Endothelial cell of umbilical vein (primary cell): ENCODE measurements at regions of chr1 and their contacts with region 1.

Region 1: DNA sequence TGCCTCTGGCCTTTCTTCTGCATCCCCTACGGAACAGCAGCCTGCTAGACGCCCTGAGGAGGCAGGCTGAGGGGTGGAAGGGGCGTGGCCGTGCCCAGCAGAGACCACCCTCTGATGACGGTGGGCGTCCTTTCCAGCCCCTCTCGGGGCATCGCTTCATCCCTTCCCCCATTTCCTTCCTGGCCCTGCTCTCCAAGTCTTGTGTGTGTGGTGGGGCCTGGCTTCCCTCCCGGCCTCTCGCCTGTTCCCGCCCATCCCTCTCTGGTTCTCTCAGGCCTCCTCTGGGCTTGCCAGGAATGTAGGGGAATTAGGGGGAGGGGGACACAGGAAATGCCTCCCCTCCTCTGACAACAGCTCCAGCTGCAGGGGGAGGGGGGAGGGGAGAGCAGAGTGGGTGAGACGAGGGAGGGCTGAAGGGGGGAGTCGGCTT is 51.1 kb downstream of the SKI start:
- DNase-seq: peak; percentile 98
- H3K4me3 ChIP-seq: no peak overlapping the region
- H3K27ac ChIP-seq: peak overlapping the region; percentile 70
- H3K4me1 ChIP-seq: peaks cover 24% of the 10 kb centered on the region
- H3K27me3 ChIP-seq: no peaks in the 10 kb centered on the region
- CTCF ChIP-seq: no peak
- POLR2A ChIP-seq: no peak

Region 2: DNA sequence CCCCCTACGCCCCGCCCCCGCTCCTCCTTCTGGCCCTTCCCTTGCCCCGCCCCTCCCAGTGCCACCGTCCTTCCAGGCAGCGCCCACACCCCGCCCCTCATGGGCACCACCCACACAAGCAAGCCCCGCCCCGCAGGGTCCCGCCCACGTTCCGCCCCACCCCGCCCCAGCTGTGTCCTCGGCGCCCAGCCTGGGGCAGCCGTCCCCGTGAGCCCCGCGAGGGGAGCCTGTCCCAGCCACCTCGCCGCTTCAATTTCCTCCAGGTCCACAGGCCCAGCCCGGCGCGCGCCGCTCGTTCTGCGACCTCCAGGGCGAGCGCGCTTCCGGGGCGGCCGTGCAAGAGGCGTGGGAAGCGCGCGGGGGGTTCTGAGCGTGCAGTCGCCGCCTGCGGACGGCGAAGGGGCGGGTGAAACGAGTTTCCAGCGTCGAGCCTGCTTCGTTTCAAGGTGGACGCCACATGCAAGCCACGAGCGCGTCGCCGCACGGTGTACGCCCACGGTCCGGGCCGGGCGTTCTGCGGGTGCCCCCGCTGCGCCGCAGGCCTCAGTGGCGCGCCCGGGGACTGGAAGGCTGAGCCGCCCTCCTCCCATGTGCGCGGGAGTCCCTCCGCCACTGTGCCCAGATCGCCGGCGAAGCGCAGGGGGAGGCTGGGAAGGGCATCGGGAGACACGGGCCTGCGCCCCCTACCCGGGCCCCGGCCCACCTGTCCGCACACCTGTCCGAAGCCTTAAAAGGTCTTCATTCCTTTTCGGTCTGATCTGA is 73.9 kb before region 1 on chr1:
- CTCF ChIA-PET with region 1: no interaction called
- POLR2A ChIA-PET with region 1: no interaction called
- dilution Hi-C with region 1: no loop called
- intact Hi-C with region 1: loop called (anchors 2 kb)
- DNase-seq: peak; percentile 86
- H3K4me3 ChIP-seq: peak overlapping the region in 2 of 3 experiments; percentile 26 to 45
- H3K27ac ChIP-seq: peak overlapping the region; percentile 24
- H3K4me1 ChIP-seq: peaks cover 29% of the 10 kb centered on the region
- H3K27me3 ChIP-seq: no peaks in the 10 kb centered on the region
- CTCF ChIP-seq: no peak
- POLR2A ChIP-seq: no peak

Region 3: GRCh38 chr1:2212542-2213491 is 66.4 kb before region 1 on chr1:
- CTCF ChIA-PET with region 1: no interaction called
- POLR2A ChIA-PET with region 1: no interaction called
- dilution Hi-C with region 1: no loop called
- intact Hi-C with region 1: loop called (anchors 1 kb)
- DNase-seq: peak; percentile 97
- H3K4me3 ChIP-seq: peak overlapping the region in 2 of 3 experiments; percentile 2 to 27
- H3K27ac ChIP-seq: peak overlapping the region; percentile 98
- H3K4me1 ChIP-seq: peaks cover 37% of the 10 kb centered on the region
- H3K27me3 ChIP-seq: no peaks in the 10 kb centered on the region
- CTCF ChIP-seq: peak; percentile 21 to 25
- POLR2A ChIP-seq: peak; percentile 71

Region 4: GRCh38 chr1:2233997-2234761 is 45.0 kb before region 1 on chr1:
- CTCF ChIA-PET with region 1: no interaction called
- POLR2A ChIA-PET with region 1: no interaction called
- dilution Hi-C with region 1: no loop called
- intact Hi-C with region 1: loop called (anchors 1 kb)
- DNase-seq: peak; percentile 47
- H3K4me3 ChIP-seq: peak overlapping the region in 2 of 3 experiments; percentile 0 to 10
- H3K27ac ChIP-seq: peak overlapping the region; percentile 46
- H3K4me1 ChIP-seq: peaks cover 40% of the 10 kb centered on the region
- H3K27me3 ChIP-seq: no peaks in the 10 kb centered on the region
- CTCF ChIP-seq: peak in 1 of 2 donors; percentile 9
- POLR2A ChIP-seq: no peak

Region 5: DNA sequence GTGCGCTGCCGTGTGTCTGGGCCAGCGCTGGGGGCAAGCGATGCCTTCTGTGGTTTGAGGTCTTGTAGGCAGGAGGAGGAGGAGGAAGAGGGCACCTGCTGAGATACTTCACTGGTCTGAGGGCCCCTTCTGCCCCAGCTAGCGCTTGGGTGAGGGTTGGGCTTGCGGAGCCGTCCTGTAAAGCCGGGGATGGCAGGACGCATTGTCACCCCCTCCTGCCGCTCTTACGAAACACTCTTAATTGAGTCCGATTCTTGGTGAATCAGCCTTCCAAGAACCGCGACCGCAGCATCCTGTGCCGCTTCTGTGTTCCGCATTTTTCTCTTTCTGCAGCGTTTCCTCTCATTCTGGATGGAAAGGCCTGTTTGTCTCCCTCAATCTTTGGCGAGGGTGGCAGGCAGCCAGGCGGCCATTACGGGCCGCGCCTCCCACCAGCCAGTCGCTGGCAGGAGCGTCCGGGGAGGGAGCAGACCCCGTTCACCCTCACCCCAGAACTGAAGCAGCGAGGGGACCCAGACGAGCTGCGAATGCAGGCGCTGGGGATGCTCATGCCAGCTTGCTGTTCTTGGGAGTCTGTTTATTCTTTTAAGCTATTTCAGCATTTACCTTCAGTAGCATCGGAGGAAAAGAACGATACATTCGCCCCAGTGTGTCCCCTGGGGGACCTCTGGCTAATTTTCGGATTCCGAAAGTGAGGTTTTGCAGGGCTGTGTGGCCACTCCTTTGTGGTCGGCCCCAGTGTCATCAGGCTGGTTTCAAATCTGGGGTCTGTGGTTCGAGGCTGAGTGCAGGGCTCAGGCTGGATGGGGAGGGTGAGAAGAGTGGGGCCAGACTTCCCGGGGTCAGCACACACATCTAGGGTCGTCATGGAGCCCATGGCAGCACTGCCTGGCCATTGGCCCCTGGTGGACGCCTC is 11.6 kb after region 1 on chr1:
- CTCF ChIA-PET with region 1: interaction called, 4 read pairs
- POLR2A ChIA-PET with region 1: no interaction called
- dilution Hi-C with region 1: no loop called
- intact Hi-C with region 1: loop called (anchors 1 kb)
- DNase-seq: peak; percentile 94
- H3K4me3 ChIP-seq: peak overlapping the region in 1 of 3 experiments; percentile 39
- H3K27ac ChIP-seq: peak overlapping the region; percentile 87
- H3K4me1 ChIP-seq: peaks cover 29% of the 10 kb centered on the region
- H3K27me3 ChIP-seq: no peaks in the 10 kb centered on the region
- CTCF ChIP-seq: no peak
- POLR2A ChIP-seq: peak; percentile 22

Region 6: GRCh38 chr1:2300851-2301606 is 21.8 kb after region 1 on chr1:
- CTCF ChIA-PET with region 1: no interaction called
- POLR2A ChIA-PET with region 1: no interaction called
- dilution Hi-C with region 1: no loop called
- intact Hi-C with region 1: loop called (anchors 1 kb)
- DNase-seq: peak; percentile 62
- H3K4me3 ChIP-seq: no peak overlapping the region
- H3K27ac ChIP-seq: peak overlapping the region; percentile 83
- H3K4me1 ChIP-seq: peaks cover 27% of the 10 kb centered on the region
- H3K27me3 ChIP-seq: no peaks in the 10 kb centered on the region
- CTCF ChIP-seq: no peak
- POLR2A ChIP-seq: peak; percentile 21

Region 7: DNA sequence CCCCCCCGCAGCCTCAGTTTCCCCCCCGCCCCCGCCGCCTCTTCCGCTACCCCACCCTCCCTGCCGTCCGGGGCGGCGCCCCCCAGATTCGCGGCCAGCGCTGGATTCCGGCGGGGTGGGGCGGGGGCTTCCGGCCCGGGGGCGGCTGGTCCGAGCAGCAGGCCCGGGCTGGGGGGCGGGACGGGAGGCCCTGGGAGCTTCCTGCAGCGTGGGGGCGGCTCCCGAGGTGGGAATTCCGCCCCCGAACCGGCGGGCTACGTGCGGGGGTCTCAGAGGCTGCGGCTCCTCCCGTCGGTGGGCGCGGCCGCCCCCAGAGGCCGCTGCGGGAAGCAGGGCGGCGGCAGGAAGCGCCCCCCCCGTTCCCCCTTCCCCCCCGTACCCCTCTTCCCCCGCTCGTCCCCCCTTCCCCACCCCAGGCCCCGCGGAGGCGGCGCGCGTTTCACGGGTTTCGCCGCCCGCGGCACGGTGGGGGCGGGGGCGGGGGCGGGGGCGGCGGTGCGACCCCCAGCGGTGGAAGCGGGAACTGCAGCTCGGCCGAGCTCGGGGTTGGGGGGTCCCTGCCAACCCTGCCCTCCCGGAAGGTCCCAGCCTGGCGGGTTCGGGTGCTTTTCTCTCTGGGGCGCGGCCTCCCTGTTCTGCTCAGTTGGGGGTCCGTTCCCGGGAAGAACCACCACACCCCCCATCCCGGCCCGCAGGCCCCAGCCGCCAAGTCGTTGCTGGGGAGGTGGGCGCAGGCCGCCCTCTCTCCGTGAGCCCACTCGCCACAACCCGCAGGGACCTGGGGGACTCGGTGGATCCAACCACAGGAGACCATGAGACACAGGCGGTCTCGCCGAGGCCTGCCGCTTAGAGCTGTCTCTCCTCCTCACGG is 35.8 kb after region 1 on chr1:
- CTCF ChIA-PET with region 1: no interaction called
- POLR2A ChIA-PET with region 1: no interaction called
- dilution Hi-C with region 1: no loop called
- intact Hi-C with region 1: loop called (anchors 2 kb)
- DNase-seq: peak; percentile 29
- H3K4me3 ChIP-seq: peak overlapping the region in 1 of 3 experiments; percentile 54
- H3K27ac ChIP-seq: no peak overlapping the region
- H3K4me1 ChIP-seq: peaks cover 7% of the 10 kb centered on the region
- H3K27me3 ChIP-seq: no peaks in the 10 kb centered on the region
- CTCF ChIP-seq: peak; percentile 44 to 72
- POLR2A ChIP-seq: no peak

Region 8: GRCh38 chr1:2360588-2361364 is 81.6 kb after region 1 on chr1:
- CTCF ChIA-PET with region 1: no interaction called
- POLR2A ChIA-PET with region 1: no interaction called
- dilution Hi-C with region 1: no loop called
- intact Hi-C with region 1: no loop called
- DNase-seq: peak; percentile 62
- H3K4me3 ChIP-seq: no peak overlapping the region
- H3K27ac ChIP-seq: no peak overlapping the region
- H3K4me1 ChIP-seq: no peaks in the 10 kb centered on the region
- H3K27me3 ChIP-seq: no peaks in the 10 kb centered on the region
- CTCF ChIP-seq: no peak
- POLR2A ChIP-seq: no peak

Region 9: DNA sequence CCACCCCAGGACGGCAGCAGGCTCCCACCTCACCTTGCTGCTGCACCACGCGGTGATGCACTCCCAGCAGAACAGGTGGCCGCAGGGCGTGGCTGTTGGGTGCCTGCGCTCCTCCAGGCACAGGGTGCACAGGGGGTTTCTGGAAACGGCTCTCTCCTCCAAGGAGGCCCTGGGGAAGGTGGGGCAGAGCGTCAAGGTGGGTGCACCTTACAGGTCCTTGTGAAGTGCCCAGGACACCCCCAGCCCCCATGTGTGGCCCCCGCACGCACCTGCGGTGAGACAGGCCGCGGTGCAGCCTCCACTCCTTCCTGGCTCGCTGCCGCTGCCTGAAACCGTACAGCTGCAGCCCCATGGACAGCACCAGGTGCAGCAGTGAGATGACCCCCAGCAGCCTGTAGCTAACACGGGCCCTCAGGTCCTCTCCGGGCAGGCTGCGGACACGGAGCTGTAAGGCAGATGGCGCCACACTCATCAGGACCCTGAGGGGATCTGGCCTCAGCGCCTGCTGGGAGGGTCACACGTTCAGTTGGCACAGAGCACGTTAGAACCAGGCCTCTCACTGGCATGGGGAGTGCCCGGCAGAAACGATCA is 127.3 kb after region 1 on chr1:
- CTCF ChIA-PET with region 1: no interaction called
- POLR2A ChIA-PET with region 1: no interaction called
- dilution Hi-C with region 1: no loop called
- intact Hi-C with region 1: no loop called
- DNase-seq: no peak
- H3K4me3 ChIP-seq: no peak overlapping the region
- H3K27ac ChIP-seq: no peak overlapping the region
- H3K4me1 ChIP-seq: peaks cover 13% of the 10 kb centered on the region
- H3K27me3 ChIP-seq: no peaks in the 10 kb centered on the region
- CTCF ChIP-seq: no peak
- POLR2A ChIP-seq: peak; percentile 29